ENCODE measurements at regions of chr1 and their contacts with region 1.

Region 1: GRCh38 chr1:92960395-92961130 is 699 bp downstream of the DIPK1A start:
- DNase-seq: peak; percentile 81
- ATAC-seq: peak; percentile 54
- H3K4me3 Mint-ChIP-seq: peak overlapping the region; percentile 92
- H3K27ac Mint-ChIP-seq: peak overlapping the region; percentile 96
- H3K4me1 Mint-ChIP-seq: peaks cover 36% of the 10 kb centered on the region
- H3K27me3 Mint-ChIP-seq: no peaks in the 10 kb centered on the region

Region 2: DNA sequence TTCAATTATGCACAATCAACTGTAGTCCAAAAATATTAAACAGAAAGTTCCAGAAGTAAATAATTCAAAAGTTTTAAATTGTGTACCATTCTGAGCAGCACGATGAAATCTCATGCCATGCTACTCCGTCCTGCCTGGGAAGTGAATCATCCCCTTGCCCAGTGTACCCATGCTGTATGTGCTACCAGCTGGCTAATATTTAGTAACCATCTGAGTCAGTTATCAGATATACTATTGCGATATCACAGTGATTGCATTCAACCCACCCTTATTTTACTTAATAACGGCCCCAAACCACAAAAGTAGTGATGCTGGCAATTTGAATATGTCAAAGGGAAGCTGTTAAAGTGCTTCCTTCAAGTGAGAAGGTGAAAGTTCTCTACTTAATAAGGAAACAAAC is 231.9 kb before region 1 on chr1:
- CTCF ChIA-PET with region 1: no interaction called
- POLR2A ChIA-PET with region 1: no interaction called
- DNase-seq: no peak
- ATAC-seq: no peak
- H3K4me3 Mint-ChIP-seq: no peak overlapping the region
- H3K27ac Mint-ChIP-seq: no peak overlapping the region
- H3K4me1 Mint-ChIP-seq: no peaks in the 10 kb centered on the region
- H3K27me3 Mint-ChIP-seq: peaks cover 11% of the 10 kb centered on the region

Region 3: DNA sequence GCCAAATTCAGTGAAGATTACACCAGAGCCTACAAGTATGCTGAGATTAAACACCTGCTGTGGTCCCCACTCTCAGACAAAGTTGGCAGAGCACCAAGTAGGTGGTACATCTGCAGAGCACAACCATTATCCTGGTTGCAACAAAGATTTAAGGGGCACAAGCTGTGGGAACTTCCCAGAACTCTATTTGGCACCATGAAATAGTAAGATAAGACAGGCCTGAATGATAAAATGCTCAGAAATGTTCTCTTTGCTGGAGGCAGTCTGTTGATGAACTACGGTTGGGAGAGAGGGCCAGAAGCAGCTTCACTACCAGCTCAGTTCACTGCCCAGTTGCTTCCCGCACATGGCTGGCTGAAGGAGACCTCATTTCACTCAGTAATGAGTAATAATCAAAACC is 108.8 kb before region 1 on chr1:
- CTCF ChIA-PET with region 1: interaction called, 12 read pairs
- POLR2A ChIA-PET with region 1: interaction called, 6 read pairs
- DNase-seq: no peak
- ATAC-seq: no peak
- H3K4me3 Mint-ChIP-seq: no peak overlapping the region
- H3K27ac Mint-ChIP-seq: no peak overlapping the region
- H3K4me1 Mint-ChIP-seq: peaks cover 7% of the 10 kb centered on the region
- H3K27me3 Mint-ChIP-seq: no peaks in the 10 kb centered on the region

Region 4: DNA sequence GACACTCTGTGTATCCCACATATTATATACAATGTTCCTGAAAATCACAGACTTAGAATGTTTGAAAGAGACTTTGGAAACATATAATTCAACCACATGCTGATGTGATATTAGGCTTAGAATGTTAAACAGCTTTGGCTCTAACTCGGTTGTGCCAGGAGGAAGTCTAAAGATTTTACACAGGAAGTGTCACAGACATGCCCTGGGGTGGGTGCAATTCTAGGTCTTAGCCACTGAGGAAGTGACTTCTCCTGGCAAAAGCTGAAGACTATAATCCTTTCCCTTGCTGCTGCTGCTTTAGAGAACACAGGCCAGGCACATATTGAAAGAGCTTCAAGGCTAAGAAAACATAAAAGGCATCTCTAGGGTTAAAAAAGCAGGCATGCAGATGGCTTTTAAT is 77.7 kb before region 1 on chr1:
- CTCF ChIA-PET with region 1: interaction called, 15 read pairs
- POLR2A ChIA-PET with region 1: interaction called, 5 read pairs
- DNase-seq: peak; percentile 56
- ATAC-seq: peak; percentile 88
- H3K4me3 Mint-ChIP-seq: peak overlapping the region; percentile 3
- H3K27ac Mint-ChIP-seq: peak overlapping the region; percentile 56
- H3K4me1 Mint-ChIP-seq: peaks cover 32% of the 10 kb centered on the region
- H3K27me3 Mint-ChIP-seq: no peaks in the 10 kb centered on the region

Region 5: GRCh38 chr1:92975551-92976232 is 15.1 kb after region 1 on chr1:
- CTCF ChIA-PET with region 1: interaction called, 219 read pairs
- POLR2A ChIA-PET with region 1: interaction called, 55 read pairs
- DNase-seq: peak; percentile 41
- ATAC-seq: peak; percentile 29
- H3K4me3 Mint-ChIP-seq: no peak overlapping the region
- H3K27ac Mint-ChIP-seq: peak overlapping the region; percentile 69
- H3K4me1 Mint-ChIP-seq: peaks cover 74% of the 10 kb centered on the region
- H3K27me3 Mint-ChIP-seq: no peaks in the 10 kb centered on the region

Region 6: DNA sequence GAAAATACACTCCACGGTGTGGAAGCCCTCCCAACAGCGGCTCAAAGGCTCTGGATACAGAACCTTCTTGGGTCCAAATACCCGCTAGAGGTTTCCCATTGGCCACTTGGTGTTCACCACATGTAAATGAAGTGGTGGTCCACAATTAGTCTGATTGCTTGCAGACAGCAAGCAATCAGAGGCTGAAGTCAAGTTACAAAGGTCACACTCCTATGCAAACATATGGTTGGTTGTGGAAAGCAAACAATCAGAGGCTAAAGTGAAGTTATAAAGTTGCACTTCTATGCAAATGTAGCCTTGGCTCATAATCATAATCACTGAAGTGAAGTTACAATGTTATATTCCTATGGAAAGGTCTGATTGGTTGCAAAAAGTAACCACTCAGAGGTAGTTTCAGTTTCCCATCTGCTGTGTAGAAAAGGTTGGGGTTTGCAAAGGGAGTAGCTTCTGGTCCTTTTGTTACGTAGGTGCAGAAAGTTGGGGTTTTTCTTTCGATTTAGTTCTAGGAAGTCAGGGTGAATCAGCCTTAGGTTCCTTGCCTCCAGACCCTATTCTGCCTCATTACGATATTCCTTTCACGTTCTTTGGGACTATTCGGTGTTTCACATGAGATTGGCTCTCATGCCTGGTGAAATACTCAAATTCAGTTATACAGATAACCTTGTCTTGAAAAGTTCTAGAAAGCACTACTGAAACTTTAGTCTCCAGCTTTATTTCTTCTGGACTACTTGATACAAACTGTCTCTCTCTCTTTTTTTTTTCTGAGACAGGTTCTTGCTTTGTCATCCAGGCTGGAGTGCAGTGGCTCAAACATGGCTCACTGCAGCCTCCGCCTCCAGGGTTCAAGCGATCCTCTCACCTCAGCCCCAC is 81.9 kb after region 1 on chr1:
- CTCF ChIA-PET with region 1: no interaction called
- POLR2A ChIA-PET with region 1: interaction called, 11 read pairs
- DNase-seq: peak; percentile 67
- ATAC-seq: peak; percentile 98
- H3K4me3 Mint-ChIP-seq: peak overlapping the region; percentile 77
- H3K27ac Mint-ChIP-seq: peak overlapping the region; percentile 93
- H3K4me1 Mint-ChIP-seq: peaks cover 31% of the 10 kb centered on the region
- H3K27me3 Mint-ChIP-seq: no peaks in the 10 kb centered on the region

Region 7: DNA sequence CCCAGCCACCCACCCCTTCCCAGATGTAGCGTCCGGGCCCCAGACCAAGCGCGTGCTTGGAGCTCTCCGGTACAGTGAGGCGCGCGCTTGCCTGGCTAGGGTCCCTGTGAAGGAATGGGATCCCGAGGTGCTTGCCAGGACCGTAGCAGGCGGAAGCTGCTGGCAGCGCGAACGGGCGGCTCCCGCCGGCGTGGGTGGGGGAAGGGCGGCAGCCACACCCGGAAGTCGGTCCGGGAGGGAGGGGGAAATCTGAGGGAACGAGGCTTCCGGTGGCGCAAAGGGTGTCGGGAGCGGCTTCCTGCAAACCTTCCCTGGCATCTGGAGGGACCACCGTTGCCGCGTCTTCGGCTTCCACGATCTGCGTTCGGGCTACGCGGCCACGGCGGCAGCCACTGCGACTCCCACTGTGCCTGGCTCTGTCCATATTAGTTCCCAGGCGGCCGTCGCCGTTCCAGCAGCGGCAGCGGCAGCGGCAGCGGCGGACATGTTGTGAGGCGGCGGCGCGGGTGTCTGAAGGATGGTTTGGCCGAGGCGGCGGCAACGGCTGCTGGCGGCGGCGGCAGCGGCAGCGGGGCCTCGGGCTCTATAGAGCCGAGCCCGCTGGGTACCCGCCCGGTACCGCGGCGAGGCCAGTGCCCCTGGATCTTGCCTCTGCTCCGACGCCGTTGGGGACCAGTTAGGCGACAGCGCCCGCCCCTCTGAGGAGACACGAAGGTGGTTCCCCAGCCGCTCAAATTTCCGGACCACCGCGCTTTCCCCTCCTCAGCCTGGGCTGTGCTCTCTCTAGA is 385.3 kb after region 1 on chr1 and contains the start of gene DR1:
- CTCF ChIA-PET with region 1: no interaction called
- POLR2A ChIA-PET with region 1: interaction called, 12 read pairs
- DNase-seq: peak; percentile 93
- ATAC-seq: peak; percentile 71
- H3K4me3 Mint-ChIP-seq: peak within 1 kb of the TSS; percentile 91
- H3K27ac Mint-ChIP-seq: peak within 1 kb of the TSS; percentile 98
- H3K4me1 Mint-ChIP-seq: peaks cover 19% of the 10 kb centered on the region
- H3K27me3 Mint-ChIP-seq: no peaks in the 10 kb centered on the region
- total RNA-seq, gene DR1: 94.0 to 94.1 TPM